Caco-2 (cell line): ENCODE measurements at regions of chr19 and their contacts with region 1.

Region 1: DNA sequence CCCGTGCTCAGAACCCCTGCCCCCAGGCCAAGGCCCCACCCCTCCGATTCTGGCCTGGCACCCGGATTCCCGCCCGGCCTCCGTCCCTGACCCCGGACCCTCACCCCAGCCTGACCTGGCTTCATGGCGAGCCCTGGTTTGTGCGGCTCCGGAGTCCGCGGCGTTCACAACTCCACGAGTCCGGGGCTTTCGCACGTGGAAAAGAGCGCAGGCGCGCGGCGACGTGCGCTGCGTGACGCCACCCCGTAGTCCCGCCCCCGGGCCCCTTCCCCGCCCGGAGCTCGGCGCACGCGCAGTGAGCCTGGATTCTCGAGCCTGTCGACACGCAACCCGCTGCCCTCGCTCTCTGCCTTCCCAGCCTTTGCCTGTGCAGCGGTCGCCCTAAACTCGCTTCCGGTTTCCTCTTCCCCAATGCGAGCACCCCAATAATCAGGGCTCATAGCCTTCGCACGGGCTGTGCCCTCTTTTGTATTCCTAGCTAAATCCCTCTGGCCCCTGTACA is at the start of gene FBL:
- DNase-seq: peak; percentile 96 to 98
- H3K4me3 ChIP-seq: peak within 1 kb of the TSS; percentile 79
- H3K4me3 Mint-ChIP-seq: peak within 1 kb of the TSS; percentile 88
- H3K27ac Mint-ChIP-seq: peak within 1 kb of the TSS; percentile 81
- H3K4me1 ChIP-seq: peaks cover 25% of the 10 kb centered on the region
- H3K4me1 Mint-ChIP-seq: peaks cover 48% of the 10 kb centered on the region
- H3K27me3 ChIP-seq: no peaks in the 10 kb centered on the region
- H3K27me3 Mint-ChIP-seq: no peaks in the 10 kb centered on the region
- CTCF ChIP-seq: no peak
- total RNA-seq, gene FBL: 374 and 411 TPM in 2 replicates

Region 2: GRCh38 chr19:39679056-39679790 is 167.0 kb before region 1 on chr19:
- CTCF ChIA-PET with region 1: no interaction called
- POLR2A ChIA-PET with region 1: no interaction called
- intact Hi-C with region 1: loop called (anchors 2 kb)
- DNase-seq: no peak
- H3K4me3 ChIP-seq: no peak overlapping the region
- H3K4me3 Mint-ChIP-seq: no peak overlapping the region
- H3K27ac Mint-ChIP-seq: no peak overlapping the region
- H3K4me1 ChIP-seq: no peaks in the 10 kb centered on the region
- H3K4me1 Mint-ChIP-seq: no peaks in the 10 kb centered on the region
- H3K27me3 ChIP-seq: no peaks in the 10 kb centered on the region
- H3K27me3 Mint-ChIP-seq: peaks cover 11% of the 10 kb centered on the region
- CTCF ChIP-seq: no peak

Region 3: DNA sequence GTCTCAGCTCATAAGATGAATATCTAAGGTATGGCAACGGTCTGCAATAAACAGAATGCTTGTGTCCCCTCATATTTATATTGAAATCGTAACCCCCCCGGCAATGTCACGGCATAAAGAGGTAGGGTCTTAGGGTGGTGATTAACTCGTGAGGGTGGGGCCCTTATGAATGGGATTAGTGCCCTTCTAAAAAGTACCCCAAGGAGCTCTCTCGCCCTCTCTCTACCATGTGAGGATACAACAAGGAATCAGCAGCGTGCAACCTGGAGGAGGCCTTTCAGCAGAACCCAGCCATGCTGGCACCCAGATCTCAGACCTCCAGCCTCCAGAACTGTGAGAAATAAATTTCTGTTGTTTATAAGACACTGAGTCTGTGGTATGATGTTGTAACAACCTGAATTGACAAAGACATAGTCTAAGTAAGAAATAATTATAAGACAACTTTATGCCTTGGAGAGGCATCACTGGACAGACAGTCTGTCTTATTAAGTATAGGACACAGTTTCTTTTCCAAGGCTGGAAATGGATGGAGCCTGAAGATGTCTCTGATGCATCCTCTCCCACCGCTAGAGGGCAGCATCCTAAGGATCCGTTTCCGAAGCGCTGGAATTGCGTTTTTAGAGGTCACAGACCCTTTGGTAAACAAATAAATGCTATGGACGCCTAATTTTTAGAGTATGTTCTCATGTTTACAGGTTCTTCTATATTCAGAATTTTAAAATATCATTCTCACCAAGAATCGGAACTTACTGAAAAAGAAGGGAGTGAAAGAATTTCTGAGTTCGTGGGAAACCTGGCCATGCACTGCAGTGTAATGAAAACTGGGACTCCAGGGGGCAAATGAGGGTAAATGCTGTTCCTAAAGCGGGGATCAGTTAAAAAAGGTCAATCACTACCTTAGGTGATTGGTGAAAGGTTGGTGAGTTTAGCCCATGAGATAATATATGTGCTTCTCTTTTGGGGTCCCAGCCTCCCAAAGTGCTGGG is 80.8 kb before region 1 on chr19:
- CTCF ChIA-PET with region 1: no interaction called
- POLR2A ChIA-PET with region 1: no interaction called
- intact Hi-C with region 1: loop called (anchors 2 kb)
- DNase-seq: peak; percentile 44 to 59
- H3K4me3 ChIP-seq: no peak overlapping the region
- H3K4me3 Mint-ChIP-seq: no peak overlapping the region
- H3K27ac Mint-ChIP-seq: no peak overlapping the region
- H3K4me1 ChIP-seq: no peaks in the 10 kb centered on the region
- H3K4me1 Mint-ChIP-seq: no peaks in the 10 kb centered on the region
- H3K27me3 ChIP-seq: no peaks in the 10 kb centered on the region
- H3K27me3 Mint-ChIP-seq: peaks cover 14% of the 10 kb centered on the region
- CTCF ChIP-seq: peak; percentile 86

Region 4: GRCh38 chr19:39792999-39793546 is 53.2 kb before region 1 on chr19:
- CTCF ChIA-PET with region 1: interaction called, 8 read pairs
- POLR2A ChIA-PET with region 1: no interaction called
- intact Hi-C with region 1: loop called (anchors 1 kb)
- DNase-seq: peak; percentile 57 to 77
- H3K4me3 ChIP-seq: peak overlapping the region; percentile 23
- H3K4me3 Mint-ChIP-seq: peak overlapping the region; percentile 35
- H3K27ac Mint-ChIP-seq: no peak overlapping the region
- H3K4me1 ChIP-seq: no peaks in the 10 kb centered on the region
- H3K4me1 Mint-ChIP-seq: no peaks in the 10 kb centered on the region
- H3K27me3 ChIP-seq: no peaks in the 10 kb centered on the region
- H3K27me3 Mint-ChIP-seq: peaks cover 23% of the 10 kb centered on the region
- CTCF ChIP-seq: peak; percentile 85 to 90

Region 5: GRCh38 chr19:39864118-39864517 is 17.9 kb after region 1 on chr19:
- CTCF ChIA-PET with region 1: no interaction called
- POLR2A ChIA-PET with region 1: no interaction called
- intact Hi-C with region 1: no loop called
- DNase-seq: no peak
- H3K4me3 ChIP-seq: no peak overlapping the region
- H3K4me3 Mint-ChIP-seq: no peak overlapping the region
- H3K27ac Mint-ChIP-seq: no peak overlapping the region
- H3K4me1 ChIP-seq: no peaks in the 10 kb centered on the region
- H3K4me1 Mint-ChIP-seq: no peaks in the 10 kb centered on the region
- H3K27me3 ChIP-seq: no peaks in the 10 kb centered on the region
- H3K27me3 Mint-ChIP-seq: peaks cover 8% of the 10 kb centered on the region
- CTCF ChIP-seq: no peak